ENCODE measurements at regions of chr5 and their contacts with region 1.

Region 1: DNA sequence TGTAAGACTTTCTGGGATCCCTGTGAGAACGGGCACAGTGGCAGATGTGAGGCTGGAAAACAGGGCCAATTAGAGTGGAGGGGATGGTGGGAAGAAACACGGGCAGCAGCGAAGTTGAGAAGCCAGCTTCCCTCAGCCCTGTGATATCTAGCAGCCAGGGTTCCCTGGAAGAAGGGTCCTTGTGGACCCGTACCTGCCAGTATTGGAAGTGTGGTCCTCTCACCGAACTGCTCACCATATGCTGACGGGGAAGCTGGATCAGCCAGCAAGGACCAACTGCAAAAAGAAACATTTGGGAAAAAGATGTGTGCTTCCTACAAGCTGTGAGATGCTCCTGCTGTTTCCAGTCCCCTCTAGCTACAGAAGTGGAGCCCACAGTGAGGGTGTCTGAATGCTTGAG is 13.6 kb downstream of the CKMT2 start:
- DNase-seq: no peak
- H3K4me3 ChIP-seq: no peak overlapping the region
- H3K27ac ChIP-seq: no peak overlapping the region
- H3K4me1 ChIP-seq: no peaks in the 10 kb centered on the region
- H3K27me3 ChIP-seq: no peaks in the 10 kb centered on the region
- CTCF ChIP-seq: no peak

Region 2: DNA sequence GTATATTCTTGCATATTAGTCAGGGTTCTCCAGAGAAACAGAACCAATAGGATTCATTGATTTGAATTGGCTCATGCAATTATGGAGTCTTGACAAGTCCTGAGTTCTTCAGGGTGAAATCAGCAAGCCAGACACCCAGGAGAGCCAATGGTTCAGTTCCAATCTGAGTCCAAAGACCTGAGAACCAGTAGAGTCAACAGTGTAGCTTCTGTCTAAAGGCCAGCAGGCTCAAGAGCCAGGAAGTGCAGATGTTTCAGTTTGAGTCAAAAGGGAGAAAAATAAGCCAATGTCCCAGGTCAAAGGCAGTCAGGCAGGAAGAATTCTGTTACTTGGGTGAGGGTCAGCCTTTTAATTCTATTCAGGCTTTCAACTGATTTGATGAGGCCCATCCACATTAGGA is 638.9 kb before region 1 on chr5:
- CTCF ChIA-PET with region 1: no interaction called
- POLR2A ChIA-PET with region 1: no interaction called
- intact Hi-C with region 1: no loop called
- DNase-seq: no peak
- H3K4me3 ChIP-seq: no peak overlapping the region
- H3K27ac ChIP-seq: no peak overlapping the region
- H3K4me1 ChIP-seq: no peaks in the 10 kb centered on the region
- H3K27me3 ChIP-seq: no peaks in the 10 kb centered on the region
- CTCF ChIP-seq: no peak

Region 3: GRCh38 chr5:81269751-81270686 is 23.3 kb after region 1 on chr5:
- CTCF ChIA-PET with region 1: no interaction called
- POLR2A ChIA-PET with region 1: interaction called, 19 read pairs
- intact Hi-C with region 1: no loop called
- DNase-seq: peak; percentile 21
- H3K4me3 ChIP-seq: no peak overlapping the region
- H3K27ac ChIP-seq: no peak overlapping the region
- H3K4me1 ChIP-seq: peaks cover 10% of the 10 kb centered on the region
- H3K27me3 ChIP-seq: no peaks in the 10 kb centered on the region
- CTCF ChIP-seq: no peak